AG04449 (cell line): ENCODE measurements at regions of chr6 and their contacts with region 1.

Region 1: GRCh38 chr6:43075670-43076463 is at the start of gene PTK7:
- DNase-seq: no peak
- H3K4me3 ChIP-seq: peak within 1 kb of the TSS; percentile 94
- CTCF ChIP-seq: no peak

Region 2: GRCh38 chr6:43120944-43121913 is 45.4 kb after region 1 on chr6:
- CTCF ChIA-PET with region 1: interaction called, 32 read pairs
- POLR2A ChIA-PET with region 1: interaction called, 36 read pairs
- DNase-seq: peak; percentile 99
- H3K4me3 ChIP-seq: peak overlapping the region; percentile 37
- CTCF ChIP-seq: peak; percentile 17

Region 3: GRCh38 chr6:43129434-43130194 is 53.7 kb after region 1 on chr6:
- CTCF ChIA-PET with region 1: interaction called, 37 read pairs
- POLR2A ChIA-PET with region 1: interaction called, 36 read pairs
- DNase-seq: no peak
- H3K4me3 ChIP-seq: no peak overlapping the region
- CTCF ChIP-seq: peak; percentile 64

Region 4: DNA sequence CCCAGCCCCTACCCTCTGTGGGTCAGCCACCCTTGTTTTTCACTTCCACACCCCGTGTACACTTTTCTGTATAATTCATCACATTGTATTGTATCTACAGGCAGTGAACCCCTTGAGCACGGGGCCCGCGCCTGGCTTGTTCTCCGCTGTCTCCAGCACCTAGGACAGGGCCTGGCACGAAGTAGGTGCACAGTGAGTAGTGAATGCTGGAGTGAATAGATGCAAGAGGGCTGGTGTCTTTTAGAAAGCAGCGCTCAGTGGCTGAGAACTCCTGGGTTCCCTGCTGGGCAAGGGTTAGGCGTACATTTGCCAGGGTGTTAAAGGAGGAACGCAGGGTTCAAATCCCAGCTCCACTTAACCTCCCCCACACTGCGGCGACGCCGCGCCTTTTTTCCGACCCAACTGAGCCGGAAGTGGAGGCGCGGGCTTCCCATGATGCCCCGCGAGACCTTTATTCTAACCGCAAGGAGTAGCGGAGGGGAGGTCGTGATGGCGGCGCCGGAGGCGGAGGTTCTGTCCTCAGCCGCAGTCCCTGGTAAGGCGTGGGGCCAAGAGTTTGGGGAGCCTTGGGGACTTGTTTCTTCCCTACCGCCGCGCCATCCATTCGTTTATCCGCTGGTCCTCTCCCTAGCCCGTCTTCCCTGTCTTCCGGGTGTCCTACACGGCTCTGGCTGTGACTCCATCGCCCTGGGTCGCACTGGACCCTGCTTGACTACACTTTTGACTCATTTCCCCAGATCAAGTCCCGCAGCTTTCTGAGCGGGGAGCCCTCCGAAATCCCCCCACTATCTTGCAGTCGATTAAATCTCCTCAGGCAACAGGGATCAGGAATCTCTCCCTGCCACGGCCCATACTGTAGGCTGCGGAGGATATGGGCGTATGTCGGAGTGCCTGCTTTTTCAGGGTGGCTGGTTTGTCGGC is 559.8 kb after region 1 on chr6 and contains the start of gene MAD2L1BP:
- CTCF ChIA-PET with region 1: no interaction called
- POLR2A ChIA-PET with region 1: no interaction called
- DNase-seq: no peak
- H3K4me3 ChIP-seq: peak within 1 kb of the TSS; percentile 91
- CTCF ChIP-seq: no peak